PC-9 (cell line): ENCODE measurements at regions of chr20 and their contacts with region 1.

Region 1: DNA sequence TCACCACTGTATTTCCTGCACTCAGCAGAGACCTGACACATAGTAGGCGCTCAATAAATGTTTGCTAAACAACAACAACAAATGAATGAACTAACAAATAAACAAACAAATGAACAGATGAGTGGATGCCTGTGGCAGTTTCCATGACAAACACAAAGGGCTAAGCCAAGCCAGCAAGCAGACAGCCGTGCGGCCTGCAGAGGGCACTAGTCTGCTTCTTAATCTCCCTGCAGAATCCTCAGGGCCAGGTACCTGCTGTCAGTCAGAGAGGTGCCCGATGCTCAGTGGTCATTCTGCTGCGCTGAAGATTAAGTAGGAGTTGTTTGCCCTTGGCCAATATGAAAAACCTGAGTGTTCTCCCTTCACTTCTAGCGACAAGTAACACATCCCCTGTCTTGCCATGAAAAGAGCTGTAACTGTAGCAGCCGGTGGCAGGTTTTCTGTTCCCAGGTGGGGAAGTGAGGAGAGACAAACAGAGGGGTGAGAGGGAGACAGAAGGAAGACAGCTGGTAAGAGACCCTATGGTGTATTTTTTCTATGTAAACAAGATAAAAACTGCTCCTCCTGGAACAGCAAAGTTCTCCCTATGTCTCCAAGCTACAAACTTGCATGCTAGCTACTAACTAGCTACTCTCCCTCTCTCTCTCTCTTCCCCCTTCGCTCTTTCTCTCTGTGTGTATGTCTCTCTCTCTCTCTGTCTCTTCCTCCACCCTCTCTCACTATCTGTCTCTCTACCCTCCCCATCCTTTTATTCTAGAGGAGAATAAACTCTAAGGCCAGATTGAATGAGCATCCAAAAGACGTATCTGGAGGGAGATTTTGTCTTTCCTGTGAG is at the start of gene MC3R:
- DNase-seq: peak; percentile 45 to 53
- H3K4me3 ChIP-seq: no peak within 1 kb of the TSS
- H3K27ac ChIP-seq: no peak within 1 kb of the TSS
- H3K4me1 ChIP-seq: no peaks in the 10 kb centered on the region
- H3K27me3 ChIP-seq: peaks cover 54% of the 10 kb centered on the region
- CTCF ChIP-seq: peak; percentile 84
- total RNA-seq, gene MC3R: not detected in 2 replicates

Region 2: DNA sequence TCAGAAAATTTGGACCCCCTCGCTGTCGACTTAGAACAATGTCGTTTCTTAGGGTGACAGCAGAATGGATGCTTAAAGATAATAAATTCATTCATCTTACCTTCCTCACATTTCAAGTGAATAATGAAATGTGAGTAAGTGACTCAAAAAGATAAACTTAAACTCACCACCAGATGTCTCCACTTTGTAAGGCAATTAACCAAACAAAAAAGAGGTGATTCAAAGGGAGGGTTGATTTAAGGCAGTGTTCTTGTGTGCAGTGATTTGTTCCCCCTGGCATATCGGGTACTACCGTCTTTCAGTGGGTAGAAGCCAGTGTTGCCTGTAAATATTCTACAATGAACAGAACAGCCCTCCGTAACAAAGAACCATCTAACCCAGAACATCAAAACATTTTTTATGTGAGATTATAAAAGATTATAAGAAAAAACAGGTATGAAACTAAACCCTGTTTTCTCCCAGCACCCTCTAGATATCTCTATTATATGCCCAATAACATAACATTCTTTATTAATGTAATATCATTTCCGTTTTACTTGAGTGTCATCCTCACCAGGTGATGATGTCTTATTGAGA is 832.5 kb before region 1 on chr20:
- CTCF ChIA-PET with region 1: no interaction called
- POLR2A ChIA-PET with region 1: no interaction called
- intact Hi-C with region 1: loop called (anchors 5 kb)
- DNase-seq: no peak
- H3K4me3 ChIP-seq: no peak overlapping the region
- H3K27ac ChIP-seq: no peak overlapping the region
- H3K4me1 ChIP-seq: no peaks in the 10 kb centered on the region
- H3K27me3 ChIP-seq: peaks cover 7% of the 10 kb centered on the region
- CTCF ChIP-seq: peak; percentile 61; the same call in 1 of the 2 replicates

Region 3: DNA sequence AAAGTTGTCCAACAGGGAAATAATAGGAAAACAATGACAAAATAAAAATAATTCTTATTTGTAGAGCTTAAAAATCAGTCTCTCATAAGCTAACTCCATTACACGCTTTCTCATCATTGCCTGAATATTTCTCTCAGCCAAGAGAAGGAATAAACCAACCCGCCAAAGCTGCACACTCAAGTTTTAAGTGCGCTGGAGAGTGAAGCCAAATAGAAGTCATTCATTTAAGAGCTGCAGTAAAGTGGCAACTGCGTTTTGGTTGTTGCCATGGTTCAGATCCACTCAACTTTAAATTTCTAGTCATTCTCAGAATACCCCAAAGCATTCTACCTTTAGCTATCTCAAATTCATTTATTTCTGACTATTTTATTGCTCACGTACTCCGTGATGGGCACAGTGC is 473.5 kb before region 1 on chr20:
- CTCF ChIA-PET with region 1: no interaction called
- POLR2A ChIA-PET with region 1: no interaction called
- intact Hi-C with region 1: no loop called
- DNase-seq: no peak
- H3K4me3 ChIP-seq: no peak overlapping the region
- H3K27ac ChIP-seq: no peak overlapping the region
- H3K4me1 ChIP-seq: no peaks in the 10 kb centered on the region
- H3K27me3 ChIP-seq: peaks cover 28% of the 10 kb centered on the region; the same call in 1 of the 2 replicates
- CTCF ChIP-seq: no peak

Region 4: DNA sequence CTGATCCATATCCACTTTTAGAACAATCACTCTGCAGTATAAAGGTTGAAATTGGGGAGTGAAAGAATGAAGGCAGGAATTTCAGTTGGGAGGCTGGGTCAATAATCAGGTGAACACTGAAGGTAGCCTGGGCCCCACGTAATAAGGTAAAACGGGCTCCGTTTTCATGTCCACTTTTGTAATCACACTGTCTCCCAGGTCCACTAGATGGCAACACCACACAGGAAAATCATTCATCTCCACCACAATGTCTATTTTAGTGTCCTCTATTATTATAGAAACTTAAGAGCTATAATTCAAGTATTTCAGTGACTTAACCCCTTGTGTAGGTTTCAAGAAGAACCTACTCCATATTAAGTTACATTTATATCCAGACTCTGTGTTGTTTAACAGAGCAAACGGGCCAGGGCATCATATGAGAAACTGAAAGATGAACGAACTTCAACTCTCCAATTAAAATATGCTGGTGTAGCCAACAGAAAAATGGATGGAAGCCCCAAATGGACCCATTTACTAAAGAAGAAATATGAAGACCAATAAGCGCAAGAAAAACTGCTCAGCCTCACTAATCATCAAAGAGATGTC is 45.6 kb before region 1 on chr20:
- CTCF ChIA-PET with region 1: no interaction called
- POLR2A ChIA-PET with region 1: no interaction called
- intact Hi-C with region 1: loop called (anchors 2 kb)
- DNase-seq: peak in 1 of 2 experiments; percentile 7
- H3K4me3 ChIP-seq: no peak overlapping the region
- H3K27ac ChIP-seq: no peak overlapping the region
- H3K4me1 ChIP-seq: no peaks in the 10 kb centered on the region
- H3K27me3 ChIP-seq: 0 out of 2 replicates have a peak, but pooled peaks cover 6% of the 10 kb centered on the region
- CTCF ChIP-seq: peak; percentile 66

Region 5: GRCh38 chr20:56348746-56349145 is 100.6 kb after region 1 on chr20:
- CTCF ChIA-PET with region 1: no interaction called
- POLR2A ChIA-PET with region 1: interaction called, 21 read pairs
- intact Hi-C with region 1: no loop called
- DNase-seq: no peak
- H3K4me3 ChIP-seq: no peak overlapping the region
- H3K27ac ChIP-seq: no peak overlapping the region
- H3K4me1 ChIP-seq: no peaks in the 10 kb centered on the region
- H3K27me3 ChIP-seq: peaks cover 90% of the 10 kb centered on the region
- CTCF ChIP-seq: no peak

Region 6: DNA sequence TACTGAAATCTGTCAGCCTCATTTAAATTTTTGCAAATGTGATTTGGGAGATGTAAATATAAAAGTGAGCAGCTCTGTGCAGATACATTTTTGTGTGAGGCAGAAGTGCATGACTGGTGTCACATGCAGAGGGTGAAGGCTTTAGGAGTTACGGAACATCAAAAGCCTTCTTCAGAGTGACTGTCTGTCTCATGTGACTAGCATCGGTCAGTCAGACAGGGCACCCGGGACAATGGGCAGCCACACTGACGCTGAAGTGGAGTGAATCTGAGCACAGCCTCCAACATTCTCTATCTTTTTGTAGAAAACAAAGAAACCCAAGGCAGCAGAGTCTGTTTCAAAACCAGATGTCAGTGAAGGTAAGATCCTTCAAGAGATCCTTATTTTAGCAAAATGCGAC is 268.5 kb after region 1 on chr20:
- CTCF ChIA-PET with region 1: no interaction called
- POLR2A ChIA-PET with region 1: no interaction called
- intact Hi-C with region 1: loop called (anchors 5 kb)
- DNase-seq: no peak
- H3K4me3 ChIP-seq: no peak overlapping the region
- H3K27ac ChIP-seq: no peak overlapping the region
- H3K4me1 ChIP-seq: no peaks in the 10 kb centered on the region
- H3K27me3 ChIP-seq: no peaks in the 10 kb centered on the region
- CTCF ChIP-seq: no peak

Region 7: DNA sequence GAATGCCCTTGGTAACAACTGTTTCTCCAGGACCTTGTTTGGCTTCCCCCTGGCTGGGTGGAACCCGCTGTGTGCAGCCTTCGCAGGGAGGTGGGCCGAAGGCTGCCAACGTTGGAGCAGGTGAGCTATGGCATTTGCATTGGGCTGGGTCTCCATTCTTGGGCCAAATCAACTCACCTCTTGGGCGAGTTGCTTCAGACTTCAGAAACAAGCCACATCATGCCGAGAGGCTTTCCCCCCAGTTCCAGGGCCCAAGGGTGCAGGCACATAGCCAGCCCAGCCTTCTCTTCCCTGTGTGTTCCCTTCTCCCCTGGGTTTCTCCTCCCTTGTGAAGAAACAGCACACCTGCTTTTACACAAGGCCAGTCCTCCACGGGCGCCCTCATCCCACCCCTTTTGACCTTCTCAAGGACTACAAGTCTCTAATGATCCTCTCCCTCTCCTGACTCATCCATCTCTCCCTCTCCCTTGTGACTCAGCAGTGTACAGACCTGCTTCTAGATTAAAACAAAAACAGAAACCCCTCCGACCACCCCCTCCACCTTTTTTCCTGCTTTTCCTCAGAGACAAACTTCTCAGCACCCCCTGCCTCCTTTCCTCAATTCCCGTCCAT is 326.5 kb after region 1 on chr20:
- CTCF ChIA-PET with region 1: no interaction called
- POLR2A ChIA-PET with region 1: no interaction called
- intact Hi-C with region 1: loop called (anchors 1 kb)
- DNase-seq: no peak
- H3K4me3 ChIP-seq: no peak overlapping the region
- H3K27ac ChIP-seq: no peak overlapping the region
- H3K4me1 ChIP-seq: peaks cover 12% of the 10 kb centered on the region
- H3K27me3 ChIP-seq: no peaks in the 10 kb centered on the region
- CTCF ChIP-seq: no peak